Pancreas (tissue), 10 donors: ENCODE measurements at regions of chr17 and their contacts with region 1.

Region 1: GRCh38 chr17:6640536-6641373 is at the starts of genes KIAA0753 and TXNDC17:
- DNase-seq: peak; percentile 85 to 95 (median 88)
- ATAC-seq: peak; percentile 91 to 97 (median 95)
- H3K4me3 ChIP-seq: peak within 1 kb of the TSS; percentile 64 to 85 (median 70)
- H3K27ac ChIP-seq: peak within 1 kb of the TSS; percentile 70 to 85 (median 78)
- H3K4me1 ChIP-seq: peaks cover 8 to 23% (median 9%) of the 10 kb centered on the region in 3 donors
- H3K27me3 ChIP-seq: no peaks in the 10 kb centered on the region
- CTCF ChIP-seq: no peak
- total RNA-seq, gene KIAA0753: 4.6 to 10.6 (median 6.0) TPM
- total RNA-seq, gene TXNDC17: 24.6 to 37.4 (median 31.5) TPM

Region 2: GRCh38 chr17:6257336-6257735 is 383.4 kb before region 1 on chr17:
- intact Hi-C with region 1: no loop called
- DNase-seq: no peak
- ATAC-seq: no peak
- H3K4me3 ChIP-seq: no peak overlapping the region
- H3K27ac ChIP-seq: no peak overlapping the region
- H3K4me1 ChIP-seq: no peaks in the 10 kb centered on the region
- H3K27me3 ChIP-seq: no peaks in the 10 kb centered on the region
- CTCF ChIP-seq: no peak

Region 3: GRCh38 chr17:6473128-6473767 is 167.5 kb before region 1 on chr17:
- intact Hi-C with region 1: loop called in 1 of 3 experiments (anchors 10 kb)
- DNase-seq: peak; percentile 62 to 91 (median 82)
- ATAC-seq: peak; percentile 90 to 98 (median 94)
- H3K4me3 ChIP-seq: no peak overlapping the region
- H3K27ac ChIP-seq: no peak overlapping the region
- H3K4me1 ChIP-seq: no peaks in the 10 kb centered on the region
- H3K27me3 ChIP-seq: no peaks in the 10 kb centered on the region
- CTCF ChIP-seq: peak; percentile 95 to 97 (median 96)

Region 4: DNA sequence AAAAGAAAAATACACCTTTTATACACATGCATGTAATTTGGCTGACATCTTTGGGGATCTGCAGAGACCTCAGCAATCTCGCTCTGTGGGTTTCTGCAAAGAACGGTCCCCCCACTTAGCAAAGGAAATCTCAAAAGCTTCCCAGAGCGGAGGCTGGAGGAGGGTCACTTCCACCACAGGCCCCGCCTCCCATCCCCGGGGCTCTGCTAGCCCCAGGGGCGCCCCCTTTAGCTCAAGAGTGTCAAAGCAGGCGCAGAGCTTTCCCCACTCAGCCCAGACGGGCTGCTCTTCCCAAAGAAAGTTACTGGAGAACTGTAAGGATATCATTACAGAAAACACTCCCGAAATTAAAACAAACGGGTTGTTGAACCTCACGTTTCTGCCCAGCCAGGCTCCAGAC is 61.0 kb after region 1 on chr17:
- intact Hi-C with region 1: no loop called
- DNase-seq: peak in 1 of 6 donors; percentile 63
- ATAC-seq: peak in 2 of 4 donors; percentile 65 to 81
- H3K4me3 ChIP-seq: no peak overlapping the region
- H3K27ac ChIP-seq: no peak overlapping the region
- H3K4me1 ChIP-seq: no peaks in the 10 kb centered on the region
- H3K27me3 ChIP-seq: no peaks in the 10 kb centered on the region
- CTCF ChIP-seq: peak in 1 of 4 donors; percentile 10